ENCODE measurements at regions of chr12 and their contacts with region 1.

Region 1: DNA sequence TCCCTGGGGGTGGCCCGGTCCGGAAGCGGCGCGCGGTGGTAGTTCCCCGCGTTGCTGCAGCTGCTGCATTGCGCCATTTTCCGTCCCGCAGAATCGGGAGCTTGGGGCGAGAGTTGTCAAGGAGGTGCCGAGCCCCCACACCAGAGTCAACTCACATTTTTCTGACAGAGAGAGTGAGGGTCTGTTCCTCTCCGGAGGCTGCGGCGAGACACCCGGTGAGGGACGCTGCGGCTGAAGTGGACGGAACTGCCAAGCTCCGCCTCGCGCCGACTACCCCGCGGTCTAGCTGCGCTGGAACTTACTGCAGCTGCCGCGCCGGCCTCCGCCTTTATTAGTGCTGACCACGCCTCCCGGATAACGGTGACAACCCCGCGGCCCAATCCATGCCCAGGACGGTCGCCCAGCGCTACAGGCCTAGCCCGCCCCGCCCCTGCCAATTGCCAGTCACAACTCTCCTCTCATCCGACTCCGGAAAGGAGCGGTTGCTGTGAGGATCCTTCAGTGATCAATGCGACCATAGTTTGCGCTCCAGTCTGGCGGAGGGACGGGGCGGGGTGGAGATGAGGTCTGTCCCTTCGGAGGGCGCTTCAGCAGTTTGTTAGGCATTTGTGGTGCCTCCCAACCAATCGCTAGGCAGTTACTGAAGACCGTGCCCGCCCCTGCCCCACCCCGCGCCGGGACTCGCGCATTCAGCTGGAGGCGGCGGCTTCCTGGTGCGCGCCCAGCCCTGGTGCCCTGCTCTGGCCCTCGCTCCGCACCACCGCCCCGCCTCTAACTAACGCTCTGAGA is at the start of gene VAMP1:
- DNase-seq: peak; percentile 98 to 99 (median 98)
- ATAC-seq: peak; percentile 97 to 99 (median 98)
- H3K4me3 ChIP-seq: peak within 1 kb of the TSS; percentile 44 to 86 (median 71)
- H3K27ac ChIP-seq: peak within 1 kb of the TSS; percentile 25 to 91 (median 84)
- H3K4me1 ChIP-seq: peaks cover 0 to 43% (median 19%) of the 10 kb centered on the region in 12 donors
- H3K27me3 ChIP-seq: no peaks in the 10 kb centered on the region
- CTCF ChIP-seq: peak in 1 of 12 donors; percentile 2
- POLR2A ChIP-seq: peak; percentile 97 to 100
- total RNA-seq, gene VAMP1: 2.1 to 8.3 (median 3.4) TPM

Region 2: GRCh38 chr12:6323340-6323994 is 147.1 kb before region 1 on chr12:
- intact Hi-C with region 1: loop called in 5 of 10 experiments (anchors 5 to 10 kb)
- DNase-seq: peak in 3 of 5 donors; percentile 59 to 77 (median 64)
- ATAC-seq: peak; percentile 46 to 77 (median 48)
- H3K4me3 ChIP-seq: peak overlapping the region in 10 of 12 donors; percentile 2 to 44 (median 21)
- H3K27ac ChIP-seq: peak overlapping the region; percentile 3 to 97 (median 80)
- H3K4me1 ChIP-seq: peaks cover 0 to 67% (median 50%) of the 10 kb centered on the region in 12 donors
- H3K27me3 ChIP-seq: no peaks in the 10 kb centered on the region
- CTCF ChIP-seq: peak; percentile 11 to 63 (median 46)
- POLR2A ChIP-seq: no peak

Region 3: GRCh38 chr12:6451348-6452244 is 19.0 kb before region 1 on chr12 and contains the start of gene TAPBPL:
- intact Hi-C with region 1: loop called in 1 of 10 experiments (anchors 1 kb)
- DNase-seq: peak; percentile 88 to 93 (median 90)
- ATAC-seq: peak; percentile 91 to 96 (median 94)
- H3K4me3 ChIP-seq: peak within 1 kb of the TSS; percentile 40 to 99 (median 68)
- H3K27ac ChIP-seq: peak within 1 kb of the TSS; percentile 90 to 100 (median 97)
- H3K4me1 ChIP-seq: peaks cover 0 to 42% (median 25%) of the 10 kb centered on the region in 12 donors
- H3K27me3 ChIP-seq: no peaks in the 10 kb centered on the region
- CTCF ChIP-seq: no peak
- POLR2A ChIP-seq: peak; percentile 19 to 64
- total RNA-seq, gene TAPBPL: 6.9 to 55.6 (median 14.1) TPM

Region 4: DNA sequence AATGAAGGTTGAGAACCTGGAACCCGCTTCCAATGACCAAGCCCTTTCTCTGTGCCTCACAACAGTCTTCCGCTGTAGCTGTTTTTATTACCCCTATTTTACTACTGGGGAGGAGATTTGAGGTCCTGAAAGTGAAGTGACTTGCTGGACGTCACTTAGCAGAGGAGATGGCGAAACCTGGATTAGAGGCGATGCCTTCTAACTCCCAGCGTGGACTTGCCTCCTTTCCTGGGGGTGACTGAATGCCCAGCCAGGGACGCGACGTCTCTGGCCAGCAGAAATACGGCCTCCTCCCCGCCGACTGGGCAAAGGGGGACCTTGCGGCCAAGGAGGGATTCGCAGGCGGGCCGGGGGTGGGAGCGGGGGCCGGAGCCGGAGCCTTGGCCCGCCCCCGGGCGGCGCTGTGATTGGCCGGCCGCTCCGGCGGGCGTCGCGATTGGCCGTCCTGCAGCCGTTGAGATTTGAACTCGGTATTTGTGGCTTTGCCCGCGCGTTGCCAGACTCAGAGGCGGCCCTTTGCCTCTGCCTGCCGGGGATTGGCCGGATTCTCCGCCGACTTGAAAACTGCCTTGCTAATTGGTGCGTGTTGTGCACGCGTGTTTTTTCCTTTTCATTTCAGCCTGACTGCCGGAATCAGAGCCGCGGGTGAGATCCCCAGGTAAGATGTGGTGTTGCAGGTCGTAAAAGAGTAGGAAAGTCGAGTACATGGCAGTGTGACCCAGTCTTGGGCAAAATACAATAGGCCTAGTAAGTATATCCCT is 23.1 kb after region 1 on chr12 and contains the start of gene NCAPD2:
- intact Hi-C with region 1: loop called in 2 of 10 experiments (anchors 1 to 2 kb)
- DNase-seq: peak; percentile 93 to 97 (median 96)
- ATAC-seq: peak; percentile 92 to 96 (median 96)
- H3K4me3 ChIP-seq: peak within 1 kb of the TSS; percentile 42 to 94 (median 86)
- H3K27ac ChIP-seq: peak within 1 kb of the TSS; percentile 86 to 99 (median 98)
- H3K4me1 ChIP-seq: peaks cover 0 to 30% (median 20%) of the 10 kb centered on the region in 12 donors
- H3K27me3 ChIP-seq: no peaks in the 10 kb centered on the region
- CTCF ChIP-seq: peak in 10 of 12 donors; percentile 8 to 49 (median 30)
- POLR2A ChIP-seq: peak in 1 of 2 donors; percentile 64
- total RNA-seq, gene NCAPD2: 8.4 to 22.4 (median 11.3) TPM

Region 5: DNA sequence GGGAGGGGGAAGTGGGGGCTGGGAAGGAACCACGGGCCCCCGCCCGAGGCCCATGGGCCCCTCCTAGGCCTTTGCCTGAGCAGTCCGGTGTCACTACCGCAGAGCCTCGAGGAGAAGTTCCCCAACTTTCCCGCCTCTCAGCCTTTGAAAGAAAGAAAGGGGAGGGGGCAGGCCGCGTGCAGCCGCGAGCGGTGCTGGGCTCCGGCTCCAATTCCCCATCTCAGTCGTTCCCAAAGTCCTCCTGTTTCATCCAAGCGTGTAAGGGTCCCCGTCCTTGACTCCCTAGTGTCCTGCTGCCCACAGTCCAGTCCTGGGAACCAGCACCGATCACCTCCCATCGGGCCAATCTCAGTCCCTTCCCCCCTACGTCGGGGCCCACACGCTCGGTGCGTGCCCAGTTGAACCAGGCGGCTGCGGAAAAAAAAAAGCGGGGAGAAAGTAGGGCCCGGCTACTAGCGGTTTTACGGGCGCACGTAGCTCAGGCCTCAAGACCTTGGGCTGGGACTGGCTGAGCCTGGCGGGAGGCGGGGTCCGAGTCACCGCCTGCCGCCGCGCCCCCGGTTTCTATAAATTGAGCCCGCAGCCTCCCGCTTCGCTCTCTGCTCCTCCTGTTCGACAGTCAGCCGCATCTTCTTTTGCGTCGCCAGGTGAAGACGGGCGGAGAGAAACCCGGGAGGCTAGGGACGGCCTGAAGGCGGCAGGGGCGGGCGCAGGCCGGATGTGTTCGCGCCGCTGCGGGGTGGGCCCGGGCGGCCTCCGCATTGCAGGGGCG is 63.5 kb after region 1 on chr12 and contains the start of gene GAPDH:
- intact Hi-C with region 1: loop called in 6 of 10 experiments (anchors 1 to 5 kb)
- DNase-seq: peak; percentile 95 to 97 (median 95)
- ATAC-seq: peak; percentile 74 to 83 (median 78)
- H3K4me3 ChIP-seq: peak within 1 kb of the TSS; percentile 64 to 100 (median 90)
- H3K27ac ChIP-seq: peak within 1 kb of the TSS; percentile 90 to 100 (median 96)
- H3K4me1 ChIP-seq: peaks cover 0 to 57% (median 45%) of the 10 kb centered on the region in 12 donors
- H3K27me3 ChIP-seq: no peaks in the 10 kb centered on the region
- CTCF ChIP-seq: no peak
- POLR2A ChIP-seq: peak in 1 of 2 donors; percentile 94
- total RNA-seq, gene GAPDH: 3,379 to 7,430 (median 4,887) TPM

Measured in heart left ventricle (tissue), 16 donors.